Naive thymus-derived CD4-positive, alpha-beta T cell (primary cell): ENCODE measurements at regions of chr4 and their contacts with region 1.

Region 1: DNA sequence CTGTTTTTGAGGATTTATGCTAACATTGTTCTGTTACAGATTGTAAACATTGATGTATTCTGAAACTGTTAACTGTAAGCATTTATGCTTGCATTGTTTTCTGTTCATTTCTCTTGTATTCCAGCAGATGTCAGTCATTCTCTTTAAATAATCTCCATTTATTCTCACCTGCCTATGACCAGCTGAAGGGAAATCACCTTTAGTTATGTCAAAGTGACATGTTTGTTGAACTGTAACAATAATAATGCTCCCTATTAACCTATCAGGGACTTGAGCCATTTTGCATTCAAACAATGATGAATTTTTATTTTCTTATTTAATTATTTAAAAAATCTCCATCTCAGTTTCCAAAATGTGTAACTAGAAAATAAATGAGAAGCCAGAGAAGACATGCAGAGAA is 58.0 kb downstream of the SPCS3 start:
- DNase-seq: peak in 1 of 9 donors; percentile 1
- ATAC-seq: no peak
- H3K4me3 ChIP-seq: no peak overlapping the region
- H3K4me3 Mint-ChIP-seq: no peak overlapping the region
- H3K27ac ChIP-seq: no peak overlapping the region
- H3K27ac Mint-ChIP-seq: no peak overlapping the region
- H3K4me1 ChIP-seq: no peaks in the 10 kb centered on the region
- H3K4me1 Mint-ChIP-seq: peaks cover 0 to 3% (median 0%) of the 10 kb centered on the region in 7 donors
- H3K27me3 ChIP-seq: no peaks in the 10 kb centered on the region
- H3K27me3 Mint-ChIP-seq: peaks cover 0 to 19% (median 0%) of the 10 kb centered on the region in 5 donors

Region 2: GRCh38 chr4:176013476-176014247 is 364.1 kb before region 1 on chr4:
- CTCF ChIA-PET with region 1: no interaction called
- POLR2A ChIA-PET with region 1: no interaction called
- intact Hi-C with region 1: no loop called
- DNase-seq: no peak
- ATAC-seq: peak; percentile 26
- H3K4me3 ChIP-seq: no peak overlapping the region
- H3K4me3 Mint-ChIP-seq: no peak overlapping the region
- H3K27ac ChIP-seq: no peak overlapping the region
- H3K27ac Mint-ChIP-seq: no peak overlapping the region
- H3K4me1 ChIP-seq: no peaks in the 10 kb centered on the region
- H3K4me1 Mint-ChIP-seq: peaks cover 0 to 4% (median 0%) of the 10 kb centered on the region in 7 donors
- H3K27me3 ChIP-seq: no peaks in the 10 kb centered on the region
- H3K27me3 Mint-ChIP-seq: peaks cover 0 to 2% (median 0%) of the 10 kb centered on the region in 5 donors

Region 3: GRCh38 chr4:176534566-176534965 is 156.8 kb after region 1 on chr4:
- CTCF ChIA-PET with region 1: no interaction called
- POLR2A ChIA-PET with region 1: no interaction called
- intact Hi-C with region 1: loop called in 1 of 2 experiments (anchors 5 kb)
- DNase-seq: no peak
- ATAC-seq: no peak
- H3K4me3 ChIP-seq: no peak overlapping the region
- H3K4me3 Mint-ChIP-seq: no peak overlapping the region
- H3K27ac ChIP-seq: no peak overlapping the region
- H3K27ac Mint-ChIP-seq: no peak overlapping the region
- H3K4me1 ChIP-seq: no peaks in the 10 kb centered on the region
- H3K4me1 Mint-ChIP-seq: no peaks in the 10 kb centered on the region
- H3K27me3 ChIP-seq: no peaks in the 10 kb centered on the region
- H3K27me3 Mint-ChIP-seq: no peaks in the 10 kb centered on the region

Region 4: GRCh38 chr4:176789955-176790354 is 412.2 kb after region 1 on chr4:
- CTCF ChIA-PET with region 1: no interaction called
- POLR2A ChIA-PET with region 1: no interaction called
- intact Hi-C with region 1: loop called in 1 of 2 experiments (anchors 2 kb)
- DNase-seq: no peak
- ATAC-seq: no peak
- H3K4me3 ChIP-seq: no peak overlapping the region
- H3K4me3 Mint-ChIP-seq: no peak overlapping the region
- H3K27ac ChIP-seq: no peak overlapping the region
- H3K27ac Mint-ChIP-seq: no peak overlapping the region
- H3K4me1 ChIP-seq: no peaks in the 10 kb centered on the region
- H3K4me1 Mint-ChIP-seq: peaks cover 0 to 20% (median 10%) of the 10 kb centered on the region in 7 donors
- H3K27me3 ChIP-seq: peaks cover 0 to 5% of the 10 kb centered on the region in 2 donors
- H3K27me3 Mint-ChIP-seq: peaks cover 43 to 57% (median 48%) of the 10 kb centered on the region in 5 donors

Region 5: GRCh38 chr4:177339477-177340374 is 961.9 kb after region 1 on chr4:
- CTCF ChIA-PET with region 1: no interaction called
- POLR2A ChIA-PET with region 1: no interaction called
- intact Hi-C with region 1: loop called in 1 of 2 experiments (anchors 1 kb)
- DNase-seq: peak in 6 of 9 donors; percentile 5 to 46 (median 32)
- ATAC-seq: peak; percentile 92
- H3K4me3 ChIP-seq: no peak overlapping the region
- H3K4me3 Mint-ChIP-seq: peak overlapping the region in 1 of 10 donors; percentile 56
- H3K27ac ChIP-seq: no peak overlapping the region
- H3K27ac Mint-ChIP-seq: peak overlapping the region in 1 of 9 donors; percentile 64
- H3K4me1 ChIP-seq: no peaks in the 10 kb centered on the region
- H3K4me1 Mint-ChIP-seq: peaks cover 0 to 22% (median 0%) of the 10 kb centered on the region in 7 donors
- H3K27me3 ChIP-seq: no peaks in the 10 kb centered on the region
- H3K27me3 Mint-ChIP-seq: no peaks in the 10 kb centered on the region